Caco-2 (cell line): ENCODE measurements at regions of chr14 and their contacts with region 1.

Region 1: GRCh38 chr14:53842938-53843337 is 113.7 kb downstream of the BMP4 start:
- DNase-seq: peak; percentile 81 to 82
- H3K4me3 ChIP-seq: no peak overlapping the region
- H3K4me3 Mint-ChIP-seq: no peak overlapping the region
- H3K27ac Mint-ChIP-seq: peak overlapping the region; percentile 68
- H3K4me1 ChIP-seq: peaks cover 45% of the 10 kb centered on the region
- H3K4me1 Mint-ChIP-seq: peaks cover 41% of the 10 kb centered on the region
- H3K27me3 ChIP-seq: no peaks in the 10 kb centered on the region
- H3K27me3 Mint-ChIP-seq: no peaks in the 10 kb centered on the region
- CTCF ChIP-seq: no peak

Region 2: GRCh38 chr14:53613404-53614253 is 229.3 kb before region 1 on chr14:
- CTCF ChIA-PET with region 1: no interaction called
- POLR2A ChIA-PET with region 1: interaction called, 3 read pairs
- intact Hi-C with region 1: loop called (anchors 10 kb)
- DNase-seq: peak; percentile 89 to 91
- H3K4me3 ChIP-seq: peak overlapping the region; percentile 41
- H3K4me3 Mint-ChIP-seq: peak overlapping the region; percentile 83
- H3K27ac Mint-ChIP-seq: peak overlapping the region; percentile 98
- H3K4me1 ChIP-seq: peaks cover 56% of the 10 kb centered on the region
- H3K4me1 Mint-ChIP-seq: peaks cover 17% of the 10 kb centered on the region
- H3K27me3 ChIP-seq: no peaks in the 10 kb centered on the region
- H3K27me3 Mint-ChIP-seq: no peaks in the 10 kb centered on the region
- CTCF ChIP-seq: peak in 1 of 2 experiments; percentile 32

Region 3: DNA sequence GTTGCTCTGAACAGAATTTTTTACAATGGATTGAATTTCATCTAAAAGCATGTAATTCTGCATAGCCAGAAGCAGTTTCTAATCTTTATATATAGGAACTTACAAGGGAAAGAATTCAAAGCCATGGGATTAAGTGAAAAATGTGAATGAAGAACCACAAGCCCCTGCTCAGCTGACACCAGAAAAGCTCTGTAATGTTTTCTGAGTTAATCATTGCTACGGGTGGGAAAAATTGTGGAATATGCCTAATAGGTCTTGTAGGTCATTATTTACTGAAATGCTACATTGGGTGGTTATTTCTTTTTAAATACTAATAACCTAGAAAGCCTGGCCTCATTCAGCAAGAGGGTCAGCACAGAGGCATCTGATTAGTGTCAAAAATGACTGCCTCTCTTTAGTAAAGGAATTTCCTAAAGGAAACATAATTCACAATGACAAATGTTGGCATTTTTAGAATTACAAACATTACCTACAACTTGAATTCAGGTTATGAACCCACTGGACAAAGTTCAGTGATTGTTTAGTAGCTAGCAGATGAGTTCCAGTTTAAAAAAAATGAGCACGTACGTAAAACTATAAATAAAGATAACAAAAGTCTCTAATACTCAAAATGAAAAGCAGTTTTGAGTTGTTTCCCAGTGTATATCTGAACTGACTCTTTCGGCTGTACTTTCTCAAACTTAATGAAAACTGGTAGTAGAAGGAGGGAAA is 38.4 kb after region 1 on chr14:
- CTCF ChIA-PET with region 1: no interaction called
- POLR2A ChIA-PET with region 1: no interaction called
- intact Hi-C with region 1: loop called (anchors 1 kb)
- DNase-seq: peak; percentile 38 to 59
- H3K4me3 ChIP-seq: peak overlapping the region; percentile 8
- H3K4me3 Mint-ChIP-seq: peak overlapping the region; percentile 56
- H3K27ac Mint-ChIP-seq: peak overlapping the region; percentile 59
- H3K4me1 ChIP-seq: peaks cover 41% of the 10 kb centered on the region
- H3K4me1 Mint-ChIP-seq: peaks cover 34% of the 10 kb centered on the region
- H3K27me3 ChIP-seq: no peaks in the 10 kb centered on the region
- H3K27me3 Mint-ChIP-seq: no peaks in the 10 kb centered on the region
- CTCF ChIP-seq: no peak

Region 4: DNA sequence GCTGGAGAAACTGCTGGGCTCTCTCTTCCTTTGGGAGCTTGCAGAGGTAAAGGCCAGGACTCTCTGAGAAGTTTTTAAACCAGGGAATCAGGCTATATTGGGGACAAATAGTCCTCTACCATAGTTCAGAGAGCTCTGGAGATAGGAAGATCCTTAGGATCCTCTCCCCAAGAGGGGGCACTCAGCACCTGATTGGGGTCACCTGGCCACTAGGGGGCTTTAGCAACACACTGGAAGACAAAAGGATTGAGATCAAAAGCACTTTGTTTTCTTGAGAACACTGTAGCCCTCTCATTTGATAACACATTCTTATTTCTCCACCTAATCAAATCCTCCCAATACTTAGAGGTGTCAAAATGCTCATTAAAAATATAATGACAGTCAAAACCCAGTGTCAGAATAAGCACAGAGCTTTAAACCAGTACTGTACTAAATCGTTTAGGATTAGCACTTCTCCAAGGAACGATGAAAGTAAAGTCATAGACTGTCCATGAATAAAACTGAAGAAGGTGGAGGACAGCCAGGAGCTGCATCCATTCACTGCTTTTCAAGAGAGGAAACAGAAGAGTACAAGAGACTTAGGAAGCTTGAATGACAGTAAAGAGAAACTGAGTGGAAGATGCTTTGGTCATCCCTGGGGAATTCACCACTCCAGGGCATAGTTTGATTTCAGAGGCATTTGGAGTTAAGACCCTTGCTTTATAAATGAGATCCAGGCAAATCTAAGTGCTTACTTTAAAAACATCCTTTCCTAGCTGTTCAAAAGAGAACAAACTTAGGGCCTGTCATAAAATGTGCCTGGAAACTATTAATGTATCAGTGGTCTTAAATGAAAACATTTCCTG is 87.2 kb after region 1 on chr14:
- CTCF ChIA-PET with region 1: no interaction called
- POLR2A ChIA-PET with region 1: no interaction called
- intact Hi-C with region 1: loop called (anchors 1 kb)
- DNase-seq: peak; percentile 82 to 84
- H3K4me3 ChIP-seq: no peak overlapping the region
- H3K4me3 Mint-ChIP-seq: no peak overlapping the region
- H3K27ac Mint-ChIP-seq: peak overlapping the region; percentile 68
- H3K4me1 ChIP-seq: peaks cover 39% of the 10 kb centered on the region
- H3K4me1 Mint-ChIP-seq: peaks cover 37% of the 10 kb centered on the region
- H3K27me3 ChIP-seq: no peaks in the 10 kb centered on the region
- H3K27me3 Mint-ChIP-seq: no peaks in the 10 kb centered on the region
- CTCF ChIP-seq: peak; percentile 93 to 98

Region 5: DNA sequence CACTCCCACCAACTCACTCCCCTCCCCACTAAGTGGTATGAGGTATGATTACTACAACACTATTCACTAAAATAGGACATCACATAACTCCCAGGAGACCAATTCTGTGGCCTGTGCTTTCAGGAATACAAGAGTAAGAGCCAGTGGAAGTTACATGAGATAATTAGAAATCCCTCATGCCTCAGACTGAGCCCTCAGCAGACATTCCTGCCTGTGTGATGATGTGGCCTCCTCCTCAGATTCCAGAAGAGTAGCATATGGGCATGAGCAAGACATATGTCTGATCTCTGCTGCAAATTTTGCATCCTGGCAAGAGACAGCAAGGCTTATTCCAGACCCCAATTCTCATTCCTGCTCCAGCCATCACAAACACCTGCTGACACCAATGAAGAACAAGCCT is 159.7 kb after region 1 on chr14:
- CTCF ChIA-PET with region 1: no interaction called
- POLR2A ChIA-PET with region 1: no interaction called
- intact Hi-C with region 1: no loop called
- DNase-seq: no peak
- H3K4me3 ChIP-seq: no peak overlapping the region
- H3K4me3 Mint-ChIP-seq: no peak overlapping the region
- H3K27ac Mint-ChIP-seq: peak overlapping the region; percentile 96
- H3K4me1 ChIP-seq: peaks cover 49% of the 10 kb centered on the region
- H3K4me1 Mint-ChIP-seq: peaks cover 45% of the 10 kb centered on the region
- H3K27me3 ChIP-seq: no peaks in the 10 kb centered on the region
- H3K27me3 Mint-ChIP-seq: no peaks in the 10 kb centered on the region
- CTCF ChIP-seq: no peak